Posterior vena cava (tissue), 2 donors: ENCODE measurements at regions of chr17 and their contacts with region 1.

Region 1: DNA sequence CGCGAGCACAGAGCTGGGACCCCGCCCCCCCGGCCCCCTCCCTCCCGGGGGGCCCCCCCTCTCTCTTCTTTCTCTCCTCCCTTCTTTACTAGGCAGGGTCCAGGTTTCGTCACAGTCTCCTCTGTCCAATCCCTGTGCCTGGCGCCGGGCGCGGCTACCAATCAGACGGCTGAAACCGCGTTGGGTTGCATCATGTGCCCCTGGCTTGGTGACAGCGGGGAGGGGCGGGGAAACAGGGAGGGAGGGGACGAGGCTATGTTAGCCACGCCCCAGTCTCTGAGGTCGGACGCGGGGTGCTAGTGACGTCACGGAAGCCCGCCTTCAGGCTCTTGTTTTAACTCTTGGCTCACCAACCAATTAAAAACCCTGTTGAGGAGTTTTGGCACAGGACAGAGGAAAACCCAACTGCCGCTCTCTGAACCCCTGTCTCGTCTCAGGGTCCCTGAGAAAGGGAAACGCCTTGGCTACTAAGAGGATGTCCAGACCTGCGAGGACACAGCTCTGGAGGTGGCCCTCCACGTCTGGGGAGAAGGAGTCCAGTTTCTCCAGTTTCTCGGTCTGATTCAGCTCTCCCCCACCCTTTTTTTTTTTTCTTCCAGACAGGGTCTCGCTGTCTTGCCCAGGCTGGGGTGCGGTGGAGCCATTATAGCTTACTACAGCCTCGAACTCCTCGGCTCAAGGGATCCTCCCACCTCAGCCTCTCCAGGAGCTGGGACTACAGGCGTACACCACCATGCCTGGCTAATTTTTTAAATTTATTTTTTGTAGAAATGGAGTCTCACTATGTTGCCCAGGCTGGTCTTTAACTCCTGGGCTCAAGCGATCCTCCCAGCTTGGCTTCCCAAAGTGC is 439 bp upstream of the PLEKHH3 start:
- DNase-seq: peak; percentile 100

Region 2: GRCh38 chr17:42459256-42459800 is 217.9 kb before region 1 on chr17:
- intact Hi-C with region 1: loop called in 1 of 2 experiments (anchors 10 kb)
- DNase-seq: peak; percentile 86

Region 3: DNA sequence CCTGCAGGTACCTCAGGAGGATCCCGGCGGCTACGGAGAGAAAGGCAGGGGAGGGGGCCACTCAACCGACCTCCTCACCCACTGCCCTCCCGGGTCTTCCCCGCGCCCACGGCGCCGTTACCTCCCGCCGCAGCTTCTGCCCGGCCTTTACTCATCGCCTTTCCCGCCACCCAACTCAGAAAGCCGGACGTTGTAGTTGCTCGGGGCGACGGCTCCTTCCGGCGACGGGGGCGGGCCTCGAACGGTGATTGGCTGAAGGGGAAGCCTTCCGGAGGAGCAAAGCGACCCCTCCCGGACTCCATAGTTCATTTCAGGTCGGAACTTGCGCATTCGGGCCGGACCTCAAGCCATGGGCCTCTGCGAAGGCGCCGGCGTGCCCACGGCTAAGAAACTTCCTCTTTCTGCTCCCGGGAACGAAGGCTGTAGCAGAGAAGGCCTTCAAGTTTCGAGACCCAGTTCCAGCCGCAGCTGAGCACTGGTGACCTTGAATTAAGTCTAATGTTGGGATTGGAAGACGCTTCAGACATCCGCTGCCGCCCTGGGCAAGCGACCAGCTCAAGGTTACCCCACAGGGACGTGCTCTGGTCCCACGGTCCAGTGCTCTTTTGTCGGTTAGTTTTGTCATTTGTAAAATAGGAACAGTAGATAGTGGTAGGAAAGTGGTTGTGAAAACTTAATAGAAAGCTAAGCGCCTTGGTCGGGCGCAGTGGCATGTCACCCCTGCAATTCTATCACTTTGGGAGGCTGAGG is 99.5 kb before region 1 on chr17 and contains the start of gene PSMC3IP:
- intact Hi-C with region 1: loop called (anchors 5 to 10 kb)
- DNase-seq: peak; percentile 99
- total RNA-seq, gene PSMC3IP: 4.1 to 4.7 TPM

Region 4: GRCh38 chr17:42618442-42619150 is 58.6 kb before region 1 on chr17:
- intact Hi-C with region 1: loop called in 1 of 2 experiments (anchors 10 kb)
- DNase-seq: peak; percentile 11

Region 5: GRCh38 chr17:42754782-42755181 is 77.5 kb after region 1 on chr17:
- intact Hi-C with region 1: no loop called
- DNase-seq: peak; percentile 91